Naive thymus-derived CD4-positive, alpha-beta T cell (primary cell): ENCODE measurements at regions of chr3 and their contacts with region 1.

Region 1: GRCh38 chr3:182879031-182879611 is 85.8 kb downstream of the ATP11B start:
- DNase-seq: no peak
- ATAC-seq: no peak
- H3K4me3 ChIP-seq: no peak overlapping the region
- H3K4me3 Mint-ChIP-seq: no peak overlapping the region
- H3K27ac ChIP-seq: no peak overlapping the region
- H3K27ac Mint-ChIP-seq: peak overlapping the region in 2 of 9 donors; percentile 43 to 62
- H3K4me1 ChIP-seq: no peaks in the 10 kb centered on the region
- H3K4me1 Mint-ChIP-seq: peaks cover 0 to 14% (median 3%) of the 10 kb centered on the region in 7 donors
- H3K27me3 ChIP-seq: no peaks in the 10 kb centered on the region
- H3K27me3 Mint-ChIP-seq: no peaks in the 10 kb centered on the region

Region 2: GRCh38 chr3:182861348-182861747 is 17.8 kb before region 1 on chr3:
- CTCF ChIA-PET with region 1: no interaction called
- POLR2A ChIA-PET with region 1: interaction called, 4 read pairs
- intact Hi-C with region 1: loop called in 1 of 2 experiments (anchors 2 kb)
- DNase-seq: no peak
- ATAC-seq: no peak
- H3K4me3 ChIP-seq: no peak overlapping the region
- H3K4me3 Mint-ChIP-seq: peak overlapping the region in 1 of 10 donors; percentile 51
- H3K27ac ChIP-seq: no peak overlapping the region
- H3K27ac Mint-ChIP-seq: no peak overlapping the region
- H3K4me1 ChIP-seq: no peaks in the 10 kb centered on the region
- H3K4me1 Mint-ChIP-seq: peaks cover 0 to 34% (median 12%) of the 10 kb centered on the region in 7 donors
- H3K27me3 ChIP-seq: no peaks in the 10 kb centered on the region
- H3K27me3 Mint-ChIP-seq: no peaks in the 10 kb centered on the region